CD4-positive, alpha-beta T cell (primary cell): ENCODE measurements at regions of chr12 and their contacts with region 1.

Region 1: GRCh38 chr12:55926738-55927587 is 731 bp downstream of the PYM1 start:
- DNase-seq: peak; percentile 83 to 96 (median 88)
- ATAC-seq: peak; percentile 32
- H3K4me3 ChIP-seq: peak overlapping the region; percentile 98
- H3K4me3 Mint-ChIP-seq: peak overlapping the region; percentile 96
- H3K27ac ChIP-seq: peak overlapping the region; percentile 72 to 93
- H3K27ac Mint-ChIP-seq: peak overlapping the region; percentile 97
- H3K4me1 ChIP-seq: peaks cover 45% of the 10 kb centered on the region
- H3K4me1 Mint-ChIP-seq: peaks cover 56% of the 10 kb centered on the region
- H3K27me3 ChIP-seq: no peaks in the 10 kb centered on the region
- H3K27me3 Mint-ChIP-seq: no peaks in the 10 kb centered on the region
- CTCF ChIP-seq: peak; percentile 86

Region 2: DNA sequence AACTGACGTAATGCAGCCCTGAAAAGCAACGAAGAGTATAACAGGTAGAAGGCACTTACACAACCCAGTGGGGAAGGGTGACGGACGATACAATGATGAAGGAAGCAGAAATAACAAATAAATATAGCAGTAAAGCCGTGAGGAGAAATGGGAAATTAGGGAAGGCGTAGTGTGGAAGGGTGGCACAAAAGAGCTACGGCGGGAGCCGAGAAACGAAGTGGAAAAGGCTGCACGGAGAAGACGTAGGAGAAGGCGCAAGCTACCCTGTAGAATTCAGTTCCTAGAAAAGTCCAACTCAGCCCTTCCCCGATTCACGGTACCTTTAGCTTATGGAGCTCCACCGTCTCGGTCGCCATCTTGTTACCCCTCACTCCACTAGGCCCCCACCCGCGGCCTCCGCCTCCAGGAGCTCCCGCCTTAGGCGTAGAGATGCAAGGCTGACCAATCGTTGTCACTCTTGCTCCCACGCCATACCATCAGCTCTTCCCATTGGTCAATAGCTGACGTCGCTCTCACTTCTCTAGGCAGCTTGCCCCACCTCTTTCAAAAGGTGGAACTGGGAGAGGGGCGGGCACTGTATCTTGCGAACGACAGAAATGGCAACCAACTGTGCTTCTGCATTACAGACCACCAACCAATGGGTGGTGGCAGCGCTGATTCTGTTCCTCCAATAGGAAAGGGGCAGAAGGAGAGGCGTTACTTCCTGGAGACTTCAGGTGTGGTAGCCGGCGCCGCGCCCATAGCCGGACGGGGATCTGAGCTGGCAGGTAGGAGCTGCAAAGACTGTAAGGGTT is 109.4 kb before region 1 on chr12 and contains the starts of genes ORMDL2 and SARNP:
- CTCF ChIA-PET with region 1: interaction called, 5 read pairs
- POLR2A ChIA-PET with region 1: interaction called, 251 read pairs
- intact Hi-C with region 1: loop called (anchors 1 kb)
- DNase-seq: peak; percentile 88 to 100 (median 92)
- ATAC-seq: peak; percentile 92
- H3K4me3 ChIP-seq: peak within 1 kb of the TSS; percentile 97
- H3K4me3 Mint-ChIP-seq: no peak within 1 kb of the TSS
- H3K27ac ChIP-seq: peak within 1 kb of the TSS; percentile 71 to 87
- H3K27ac Mint-ChIP-seq: no peak within 1 kb of the TSS
- H3K4me1 ChIP-seq: peaks cover 40% of the 10 kb centered on the region
- H3K4me1 Mint-ChIP-seq: peaks cover 28% of the 10 kb centered on the region
- H3K27me3 ChIP-seq: no peaks in the 10 kb centered on the region
- H3K27me3 Mint-ChIP-seq: no peaks in the 10 kb centered on the region
- CTCF ChIP-seq: no peak
- total RNA-seq, gene ORMDL2: 13.0 to 14.9 TPM
- total RNA-seq, gene SARNP: 38.2 to 38.6 TPM

Region 3: DNA sequence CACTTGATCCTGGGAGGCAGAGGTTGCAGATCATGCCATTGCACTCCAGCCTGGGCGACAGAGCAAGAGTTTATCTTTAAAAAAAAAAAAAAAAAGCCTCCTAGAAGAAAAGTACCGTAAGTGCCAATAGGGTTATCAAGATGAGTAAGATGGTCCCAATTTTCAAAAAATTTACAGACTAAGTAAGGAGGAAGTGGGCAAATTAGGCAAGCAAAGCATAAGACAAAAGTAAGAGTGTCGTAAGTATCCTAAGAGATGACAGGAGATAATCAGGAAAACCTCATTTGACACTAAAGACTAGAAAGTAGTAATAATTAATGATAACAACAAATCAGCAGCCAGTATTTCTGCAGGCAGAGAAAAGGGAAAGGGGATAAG is 11.5 kb before region 1 on chr12:
- CTCF ChIA-PET with region 1: interaction called, 5 read pairs
- POLR2A ChIA-PET with region 1: interaction called, 11 read pairs
- intact Hi-C with region 1: no loop called
- DNase-seq: no peak
- ATAC-seq: no peak
- H3K4me3 ChIP-seq: no peak overlapping the region
- H3K4me3 Mint-ChIP-seq: no peak overlapping the region
- H3K27ac ChIP-seq: no peak overlapping the region
- H3K27ac Mint-ChIP-seq: peak overlapping the region; percentile 50
- H3K4me1 ChIP-seq: peaks cover 30% of the 10 kb centered on the region
- H3K4me1 Mint-ChIP-seq: peaks cover 42% of the 10 kb centered on the region
- H3K27me3 ChIP-seq: no peaks in the 10 kb centered on the region
- H3K27me3 Mint-ChIP-seq: no peaks in the 10 kb centered on the region
- CTCF ChIP-seq: no peak

Region 4: GRCh38 chr12:55940065-55940732 is 13.2 kb after region 1 on chr12:
- CTCF ChIA-PET with region 1: interaction called, 86 read pairs
- POLR2A ChIA-PET with region 1: interaction called, 109 read pairs
- intact Hi-C with region 1: loop called (anchors 1 kb)
- DNase-seq: peak; percentile 76 to 92 (median 82)
- ATAC-seq: peak; percentile 88
- H3K4me3 ChIP-seq: no peak overlapping the region
- H3K4me3 Mint-ChIP-seq: peak overlapping the region; percentile 72
- H3K27ac ChIP-seq: peak overlapping the region; percentile 42 to 70
- H3K27ac Mint-ChIP-seq: peak overlapping the region; percentile 97
- H3K4me1 ChIP-seq: peaks cover 78% of the 10 kb centered on the region
- H3K4me1 Mint-ChIP-seq: peaks cover 79% of the 10 kb centered on the region
- H3K27me3 ChIP-seq: no peaks in the 10 kb centered on the region
- H3K27me3 Mint-ChIP-seq: no peaks in the 10 kb centered on the region
- CTCF ChIP-seq: peak; percentile 92

Region 5: GRCh38 chr12:55946553-55946952 is 19.6 kb after region 1 on chr12:
- CTCF ChIA-PET with region 1: interaction called, 86 read pairs
- POLR2A ChIA-PET with region 1: interaction called, 85 read pairs
- intact Hi-C with region 1: no loop called
- DNase-seq: no peak
- ATAC-seq: no peak
- H3K4me3 ChIP-seq: no peak overlapping the region
- H3K4me3 Mint-ChIP-seq: no peak overlapping the region
- H3K27ac ChIP-seq: no peak overlapping the region
- H3K27ac Mint-ChIP-seq: peak overlapping the region; percentile 72
- H3K4me1 ChIP-seq: peaks cover 19% of the 10 kb centered on the region
- H3K4me1 Mint-ChIP-seq: peaks cover 40% of the 10 kb centered on the region
- H3K27me3 ChIP-seq: no peaks in the 10 kb centered on the region
- H3K27me3 Mint-ChIP-seq: no peaks in the 10 kb centered on the region
- CTCF ChIP-seq: no peak

Region 6: GRCh38 chr12:55955800-55956508 is 29.0 kb after region 1 on chr12:
- CTCF ChIA-PET with region 1: interaction called, 3 read pairs
- POLR2A ChIA-PET with region 1: interaction called, 15 read pairs
- intact Hi-C with region 1: no loop called
- DNase-seq: peak in 12 of 14 experiments; percentile 24 to 75 (median 50)
- ATAC-seq: peak; percentile 77
- H3K4me3 ChIP-seq: no peak overlapping the region
- H3K4me3 Mint-ChIP-seq: no peak overlapping the region
- H3K27ac ChIP-seq: peak overlapping the region in 1 of 2 donors; percentile 24
- H3K27ac Mint-ChIP-seq: peak overlapping the region; percentile 66
- H3K4me1 ChIP-seq: peaks cover 20% of the 10 kb centered on the region
- H3K4me1 Mint-ChIP-seq: peaks cover 25% of the 10 kb centered on the region
- H3K27me3 ChIP-seq: no peaks in the 10 kb centered on the region
- H3K27me3 Mint-ChIP-seq: no peaks in the 10 kb centered on the region
- CTCF ChIP-seq: peak; percentile 47

Region 7: GRCh38 chr12:56104109-56104814 is 177.3 kb after region 1 on chr12 and contains the start of gene PA2G4:
- CTCF ChIA-PET with region 1: no interaction called
- POLR2A ChIA-PET with region 1: interaction called, 29 read pairs
- intact Hi-C with region 1: no loop called
- DNase-seq: peak; percentile 89 to 99 (median 96)
- ATAC-seq: peak; percentile 88
- H3K4me3 ChIP-seq: peak within 1 kb of the TSS; percentile 90
- H3K4me3 Mint-ChIP-seq: peak within 1 kb of the TSS; percentile 93
- H3K27ac ChIP-seq: peak within 1 kb of the TSS; percentile 63 to 95
- H3K27ac Mint-ChIP-seq: peak within 1 kb of the TSS; percentile 100
- H3K4me1 ChIP-seq: peaks cover 48% of the 10 kb centered on the region
- H3K4me1 Mint-ChIP-seq: peaks cover 67% of the 10 kb centered on the region
- H3K27me3 ChIP-seq: no peaks in the 10 kb centered on the region
- H3K27me3 Mint-ChIP-seq: no peaks in the 10 kb centered on the region
- CTCF ChIP-seq: no peak
- total RNA-seq, gene PA2G4: 51.0 to 61.0 TPM

Region 8: DNA sequence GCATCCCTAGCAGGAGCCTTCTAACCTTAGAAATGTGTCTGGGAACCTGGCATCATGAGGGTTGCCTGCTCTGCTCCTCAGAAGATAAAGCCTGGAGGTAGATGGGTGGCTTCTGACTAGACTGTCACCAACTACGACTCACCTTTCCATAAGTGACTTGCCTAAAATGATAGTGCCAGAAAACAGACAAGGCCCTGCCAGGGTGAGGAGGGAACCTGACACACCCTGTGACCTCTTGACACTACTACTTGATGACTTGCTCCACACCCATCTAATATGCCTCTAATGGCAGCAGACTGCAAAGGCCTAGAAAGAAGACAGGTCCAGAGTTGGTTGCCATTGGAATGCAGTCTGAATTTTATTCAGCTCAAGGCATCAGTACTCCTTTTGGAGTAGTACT is 285.4 kb after region 1 on chr12:
- CTCF ChIA-PET with region 1: no interaction called
- POLR2A ChIA-PET with region 1: no interaction called
- intact Hi-C with region 1: no loop called
- DNase-seq: no peak
- ATAC-seq: no peak
- H3K4me3 ChIP-seq: no peak overlapping the region
- H3K4me3 Mint-ChIP-seq: no peak overlapping the region
- H3K27ac ChIP-seq: no peak overlapping the region
- H3K27ac Mint-ChIP-seq: no peak overlapping the region
- H3K4me1 ChIP-seq: no peaks in the 10 kb centered on the region
- H3K4me1 Mint-ChIP-seq: peaks cover 12% of the 10 kb centered on the region
- H3K27me3 ChIP-seq: no peaks in the 10 kb centered on the region
- H3K27me3 Mint-ChIP-seq: no peaks in the 10 kb centered on the region
- CTCF ChIP-seq: no peak